ENCODE measurements at regions of chr10 and their contacts with region 1.

Region 1: GRCh38 chr10:36446881-36447280 is 678.5 kb upstream of the ANKRD30A start:
- DNase-seq: no peak
- ATAC-seq: no peak
- H3K4me3 ChIP-seq: no peak overlapping the region
- H3K4me3 Mint-ChIP-seq: no peak overlapping the region
- H3K27ac ChIP-seq: no peak overlapping the region
- H3K27ac Mint-ChIP-seq: no peak overlapping the region
- H3K4me1 ChIP-seq: no peaks in the 10 kb centered on the region
- H3K4me1 Mint-ChIP-seq: no peaks in the 10 kb centered on the region
- H3K27me3 ChIP-seq: no peaks in the 10 kb centered on the region
- H3K27me3 Mint-ChIP-seq: no peaks in the 10 kb centered on the region

Region 2: GRCh38 chr10:35300063-35300699 is 1146.7 kb before region 1 on chr10:
- CTCF ChIA-PET with region 1: interaction called in 1 of 2 experiments, 13 read pairs
- POLR2A ChIA-PET with region 1: no interaction called
- DNase-seq: peak in 5 of 35 experiments; percentile 0 to 38 (median 1)
- ATAC-seq: no peak
- H3K4me3 ChIP-seq: no peak overlapping the region
- H3K4me3 Mint-ChIP-seq: no peak overlapping the region
- H3K27ac ChIP-seq: no peak overlapping the region
- H3K27ac Mint-ChIP-seq: no peak overlapping the region
- H3K4me1 ChIP-seq: no peaks in the 10 kb centered on the region
- H3K4me1 Mint-ChIP-seq: no peaks in the 10 kb centered on the region
- H3K27me3 ChIP-seq: peaks cover 0 to 3% of the 10 kb centered on the region in 2 experiments
- H3K27me3 Mint-ChIP-seq: peaks cover 9 to 16% of the 10 kb centered on the region in 2 donors

Region 3: DNA sequence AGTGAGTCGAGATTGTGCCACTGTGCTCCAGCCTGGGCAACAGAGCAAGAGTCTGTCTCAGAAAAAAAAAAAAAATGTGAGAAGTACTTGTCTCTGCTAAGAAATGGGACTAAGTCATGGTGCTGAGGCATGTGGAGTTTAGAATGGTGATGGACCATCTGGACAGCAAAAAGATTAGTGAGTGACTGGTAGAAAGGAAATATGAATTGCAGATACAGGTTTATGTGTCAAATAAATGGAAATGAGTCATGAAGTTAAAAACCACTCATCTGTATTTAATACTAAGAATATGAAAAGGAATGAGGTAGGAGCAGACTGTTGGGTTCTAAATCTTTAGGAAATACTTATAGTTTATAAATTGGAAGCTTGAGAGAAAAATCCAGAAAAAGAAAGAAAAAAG is 52.8 kb after region 1 on chr10:
- CTCF ChIA-PET with region 1: no interaction called
- POLR2A ChIA-PET with region 1: no interaction called
- DNase-seq: no peak
- ATAC-seq: no peak
- H3K4me3 ChIP-seq: no peak overlapping the region
- H3K4me3 Mint-ChIP-seq: no peak overlapping the region
- H3K27ac ChIP-seq: no peak overlapping the region
- H3K27ac Mint-ChIP-seq: no peak overlapping the region
- H3K4me1 ChIP-seq: no peaks in the 10 kb centered on the region
- H3K4me1 Mint-ChIP-seq: no peaks in the 10 kb centered on the region
- H3K27me3 ChIP-seq: no peaks in the 10 kb centered on the region
- H3K27me3 Mint-ChIP-seq: no peaks in the 10 kb centered on the region

Measured in T-cell (primary cell).